ENCODE measurements at regions of chr6 and their contacts with region 1.

Region 1: GRCh38 chr6:121849477-121849876 is 414.0 kb downstream of the GJA1 start:
- DNase-seq: peak; percentile 77
- H3K4me3 Mint-ChIP-seq: no peak overlapping the region
- H3K27ac Mint-ChIP-seq: no peak overlapping the region
- H3K4me1 Mint-ChIP-seq: no peaks in the 10 kb centered on the region
- H3K27me3 Mint-ChIP-seq: no peaks in the 10 kb centered on the region

Region 2: GRCh38 chr6:120378582-120379220 is 1470.8 kb before region 1 on chr6:
- intact Hi-C with region 1: no loop called
- DNase-seq: no peak
- H3K4me3 Mint-ChIP-seq: no peak overlapping the region
- H3K27ac Mint-ChIP-seq: no peak overlapping the region
- H3K4me1 Mint-ChIP-seq: no peaks in the 10 kb centered on the region
- H3K27me3 Mint-ChIP-seq: no peaks in the 10 kb centered on the region

Region 3: DNA sequence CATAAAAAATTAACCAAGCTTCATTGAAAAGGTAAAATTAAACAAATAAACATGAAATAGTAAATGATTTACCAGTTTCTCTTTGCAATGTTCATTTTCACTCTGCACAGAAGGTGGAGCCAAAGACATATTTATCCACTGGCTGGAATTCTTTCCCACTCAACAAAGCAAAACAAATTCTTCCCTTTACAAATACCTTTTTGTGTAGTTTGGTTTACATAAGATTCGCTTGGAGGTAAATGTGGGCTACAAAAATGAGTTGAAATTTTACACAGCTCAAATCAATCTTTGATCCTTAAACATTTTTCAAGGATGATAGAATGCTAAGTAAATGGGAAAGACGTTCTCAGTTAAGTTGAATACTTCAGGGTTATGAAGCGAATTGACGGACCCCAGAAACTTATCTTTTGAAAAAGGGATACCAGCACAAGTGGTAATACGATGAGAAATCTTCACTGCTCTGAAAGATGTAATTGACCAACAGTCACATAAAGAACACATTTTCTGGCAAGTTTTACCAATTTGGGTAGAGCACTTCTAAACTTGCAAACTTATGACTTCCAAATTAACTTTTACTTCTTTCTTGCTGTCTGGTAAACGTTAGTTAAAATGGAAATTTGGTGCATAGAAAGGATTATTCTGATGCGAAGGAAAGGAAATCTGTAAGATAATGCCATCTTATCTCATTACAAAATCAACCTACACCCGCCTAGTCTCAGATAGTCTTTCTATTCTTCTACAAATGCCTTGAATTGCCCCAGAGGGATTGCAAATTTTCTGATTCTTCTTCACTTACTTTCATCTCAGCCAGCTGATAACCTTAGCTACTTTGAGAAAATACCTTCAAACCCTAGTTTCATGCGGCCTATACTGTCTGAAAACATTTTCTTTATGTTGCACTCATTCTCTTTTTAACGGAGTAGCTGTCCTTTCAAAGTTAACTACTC is 418.7 kb before region 1 on chr6:
- intact Hi-C with region 1: loop called (anchors 2 kb)
- DNase-seq: peak; percentile 29
- H3K4me3 Mint-ChIP-seq: no peak overlapping the region
- H3K27ac Mint-ChIP-seq: no peak overlapping the region
- H3K4me1 Mint-ChIP-seq: no peaks in the 10 kb centered on the region
- H3K27me3 Mint-ChIP-seq: peaks cover 8% of the 10 kb centered on the region